Ascending aorta (tissue), 2 donors: ENCODE measurements at regions of chr12 and their contacts with region 1.

Region 1: GRCh38 chr12:123365025-123365917 is 624 bp upstream of the SBNO1 start:
- DNase-seq: peak; percentile 95 to 99
- H3K4me3 ChIP-seq: peak overlapping the region; percentile 89 to 93
- H3K27ac ChIP-seq: peak overlapping the region; percentile 90 to 92
- H3K4me1 ChIP-seq: peaks cover 4 to 22% of the 10 kb centered on the region in 2 donors
- H3K27me3 ChIP-seq: no peaks in the 10 kb centered on the region
- CTCF ChIP-seq: peak; percentile 70 to 80 (median 76)

Region 2: DNA sequence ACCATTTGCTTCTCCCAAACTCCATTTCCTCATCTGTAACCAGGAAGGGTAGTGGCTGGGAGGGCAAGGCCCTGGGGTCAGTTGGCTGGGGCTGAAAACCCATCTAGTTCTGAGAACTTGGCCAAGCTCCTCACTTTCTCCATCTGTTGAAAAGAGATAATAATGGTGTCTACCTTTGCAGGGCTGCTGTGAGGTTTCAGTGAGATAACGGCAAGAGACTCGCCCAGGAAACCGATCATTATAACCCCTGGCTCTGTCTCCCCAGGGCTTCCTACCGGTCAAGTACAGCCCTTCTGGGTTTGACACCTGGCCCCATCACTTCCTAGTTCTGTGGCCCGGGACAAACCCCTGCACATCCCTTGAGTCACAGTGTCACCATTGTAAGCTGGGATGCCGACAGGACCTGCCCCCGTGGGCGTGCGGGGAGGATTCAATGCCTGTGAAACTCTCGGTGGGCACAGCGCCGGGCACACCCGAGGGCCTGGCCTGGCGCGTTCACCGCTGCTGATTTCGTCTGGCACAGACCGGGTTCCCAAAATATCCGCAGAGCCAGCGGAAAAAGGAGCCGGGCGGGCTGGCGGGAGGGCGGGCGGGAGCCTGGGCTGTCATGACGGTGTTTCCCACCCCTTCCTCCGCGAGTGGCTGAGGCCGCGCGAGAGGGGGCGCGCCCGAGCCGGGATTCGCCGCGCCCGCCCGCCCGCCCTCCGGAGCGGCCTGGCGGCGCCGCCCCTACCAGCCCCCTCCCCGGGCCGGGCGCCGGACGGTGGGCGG is 23.1 kb after region 1 on chr12:
- intact Hi-C with region 1: loop called (anchors 1 kb)
- DNase-seq: peak; percentile 33 to 90
- H3K4me3 ChIP-seq: peak overlapping the region; percentile 57 to 71
- H3K27ac ChIP-seq: peak overlapping the region; percentile 84 to 93
- H3K4me1 ChIP-seq: peaks cover 11 to 41% of the 10 kb centered on the region in 2 donors
- H3K27me3 ChIP-seq: no peaks in the 10 kb centered on the region
- CTCF ChIP-seq: peak in 1 of 3 experiments; percentile 25

Region 3: GRCh38 chr12:123478762-123479161 is 113.5 kb after region 1 on chr12:
- intact Hi-C with region 1: loop called (anchors 5 kb)
- DNase-seq: peak; percentile 72 to 92
- H3K4me3 ChIP-seq: peak overlapping the region; percentile 6 to 46
- H3K27ac ChIP-seq: peak overlapping the region; percentile 93 to 97
- H3K4me1 ChIP-seq: peaks cover 24 to 55% of the 10 kb centered on the region in 2 donors
- H3K27me3 ChIP-seq: no peaks in the 10 kb centered on the region
- CTCF ChIP-seq: no peak

Region 4: GRCh38 chr12:123533672-123534643 is 168.7 kb after region 1 on chr12 and contains the start of gene RILPL1:
- intact Hi-C with region 1: loop called (anchors 5 kb)
- DNase-seq: peak in 1 of 2 donors; percentile 68
- H3K4me3 ChIP-seq: peak within 1 kb of the TSS; percentile 89 to 93
- H3K27ac ChIP-seq: peak within 1 kb of the TSS; percentile 87 to 95
- H3K4me1 ChIP-seq: peaks cover 0 to 22% of the 10 kb centered on the region in 2 donors
- H3K27me3 ChIP-seq: no peaks in the 10 kb centered on the region
- CTCF ChIP-seq: peak; percentile 11 to 41 (median 22)
- total RNA-seq, gene RILPL1: 1.5 TPM